Activated CD8-positive, alpha-beta T cell treated with anti-CD3 and anti-CD28 coated beads for 36 hours (primary cell): ENCODE measurements at regions of chr3 and their contacts with region 1.

Region 1: GRCh38 chr3:98817547-98818041 is 54.5 kb downstream of the ST3GAL6 start:
- DNase-seq: no peak
- ATAC-seq: peak; percentile 81
- H3K4me3 Mint-ChIP-seq: no peak overlapping the region
- H3K27ac Mint-ChIP-seq: no peak overlapping the region
- H3K4me1 Mint-ChIP-seq: no peaks in the 10 kb centered on the region
- H3K27me3 Mint-ChIP-seq: no peaks in the 10 kb centered on the region
- CTCF ChIP-seq: peak; percentile 76

Region 2: GRCh38 chr3:97957617-97958311 is 859.8 kb before region 1 on chr3:
- CTCF ChIA-PET with region 1: no interaction called
- POLR2A ChIA-PET with region 1: no interaction called
- intact Hi-C with region 1: no loop called
- DNase-seq: no peak
- ATAC-seq: no peak
- H3K4me3 Mint-ChIP-seq: no peak overlapping the region
- H3K27ac Mint-ChIP-seq: no peak overlapping the region
- H3K4me1 Mint-ChIP-seq: peaks cover 12% of the 10 kb centered on the region
- H3K27me3 Mint-ChIP-seq: no peaks in the 10 kb centered on the region
- CTCF ChIP-seq: no peak

Region 3: DNA sequence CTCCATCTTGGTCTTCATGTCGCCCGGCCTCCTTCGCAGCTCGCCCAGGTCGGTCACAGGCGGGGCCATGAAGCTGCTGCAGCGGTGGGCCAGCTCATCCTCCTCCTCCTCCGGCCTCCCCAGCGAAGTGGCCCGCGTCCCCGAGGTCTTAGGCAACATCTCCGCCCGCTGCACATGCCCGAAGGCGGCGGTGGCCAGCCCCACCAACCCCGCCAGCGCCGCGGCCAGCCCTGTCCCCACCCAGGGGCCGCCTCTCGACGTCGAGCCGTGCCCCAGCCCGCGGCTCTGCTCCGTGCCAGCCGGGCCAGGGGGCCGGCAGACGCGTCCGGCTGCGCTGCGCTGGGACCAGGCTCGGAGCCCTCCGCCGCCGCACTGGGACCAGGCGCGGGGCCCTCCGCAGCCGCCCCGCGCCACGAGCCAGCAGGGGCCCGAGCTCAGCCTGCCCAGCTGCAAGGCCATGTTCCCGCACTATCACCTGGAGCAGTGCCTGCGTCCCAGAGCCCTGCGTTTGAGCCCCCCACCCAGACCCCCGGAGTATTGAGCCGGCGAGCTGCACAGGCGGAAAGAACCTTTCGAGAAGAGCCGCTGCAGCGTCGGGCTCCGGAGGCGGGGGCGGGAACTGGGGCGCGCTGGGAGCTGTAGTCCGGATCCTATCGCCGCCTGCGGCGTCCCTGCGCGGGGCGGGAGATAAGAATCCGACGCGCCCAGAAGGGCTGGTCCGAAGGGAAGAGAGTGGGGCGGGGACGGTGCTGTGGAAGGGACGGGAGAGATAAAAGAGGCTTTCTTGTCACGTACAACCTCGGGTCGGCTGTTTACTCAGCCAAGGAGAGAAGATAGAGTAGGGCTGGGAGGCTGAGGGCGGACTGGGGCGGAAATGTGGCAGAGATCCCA is 224.3 kb before region 1 on chr3 and contains the start of gene CPOX:
- CTCF ChIA-PET with region 1: interaction called, 11 read pairs
- POLR2A ChIA-PET with region 1: no interaction called
- intact Hi-C with region 1: no loop called
- DNase-seq: peak; percentile 94
- ATAC-seq: peak; percentile 99
- H3K4me3 Mint-ChIP-seq: peak within 1 kb of the TSS; percentile 96
- H3K27ac Mint-ChIP-seq: peak within 1 kb of the TSS; percentile 96
- H3K4me1 Mint-ChIP-seq: peaks cover 41% of the 10 kb centered on the region
- H3K27me3 Mint-ChIP-seq: no peaks in the 10 kb centered on the region
- CTCF ChIP-seq: no peak
- total RNA-seq, gene CPOX: 40.5 to 45.3 TPM

Region 4: DNA sequence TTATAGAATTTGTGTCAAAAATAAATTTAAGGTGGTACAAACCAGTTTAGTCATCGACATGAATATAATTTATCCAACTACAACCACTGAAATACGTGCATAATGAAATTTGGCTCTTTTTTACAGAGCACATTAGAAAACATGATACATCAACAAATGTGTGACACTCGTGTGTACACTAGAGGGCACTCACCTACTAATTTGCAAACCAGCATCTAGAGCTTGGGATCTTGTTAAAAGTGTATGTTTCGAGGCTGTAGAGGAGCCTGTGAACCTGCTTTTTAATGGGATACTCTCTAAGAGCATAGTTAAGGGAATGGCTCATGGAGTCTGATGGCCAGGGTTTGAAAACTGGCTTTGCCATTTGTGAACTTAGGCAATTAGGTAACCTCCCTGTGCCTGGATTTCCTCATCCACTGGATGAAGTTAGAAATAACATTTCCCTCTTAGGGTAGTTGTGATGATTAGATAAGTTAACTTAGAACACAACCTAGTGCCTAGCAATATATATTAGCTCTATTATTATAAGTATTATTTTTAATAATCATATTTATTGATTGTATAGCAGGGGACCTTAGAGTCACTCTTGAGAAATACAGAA is 215.4 kb before region 1 on chr3:
- CTCF ChIA-PET with region 1: interaction called, 98 read pairs
- POLR2A ChIA-PET with region 1: no interaction called
- intact Hi-C with region 1: loop called (anchors 2 kb)
- DNase-seq: peak; percentile 41
- ATAC-seq: peak; percentile 60
- H3K4me3 Mint-ChIP-seq: no peak overlapping the region
- H3K27ac Mint-ChIP-seq: no peak overlapping the region
- H3K4me1 Mint-ChIP-seq: peaks cover 3% of the 10 kb centered on the region
- H3K27me3 Mint-ChIP-seq: peaks cover 3% of the 10 kb centered on the region
- CTCF ChIP-seq: peak; percentile 76

Region 5: DNA sequence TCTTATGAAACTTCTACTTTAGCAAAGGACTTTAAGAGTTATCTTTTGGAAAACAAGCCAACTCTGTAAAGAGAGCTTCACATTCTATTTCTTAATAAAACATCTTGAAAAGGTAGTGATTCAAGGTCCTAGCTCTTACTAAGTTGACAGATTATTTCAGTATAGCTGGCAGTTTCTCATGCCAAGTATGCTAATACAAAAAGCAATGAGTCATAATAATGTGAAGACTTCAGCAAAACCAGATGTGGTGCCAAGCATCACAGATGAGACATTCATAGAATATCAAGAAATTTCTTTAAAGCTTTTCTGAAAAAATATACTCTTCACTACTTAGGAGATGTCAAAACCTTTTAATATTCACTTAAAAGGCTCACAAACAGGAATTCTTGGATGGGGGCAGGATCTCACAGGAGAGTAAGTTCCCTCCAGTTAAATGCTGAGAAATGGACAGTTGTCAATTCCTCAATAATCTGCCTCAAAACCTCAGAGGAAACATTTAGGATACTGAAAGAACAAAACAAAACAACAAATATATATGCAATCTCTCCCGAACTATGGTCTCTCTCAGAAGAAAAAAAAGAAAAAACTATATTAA is 38.3 kb after region 1 on chr3:
- CTCF ChIA-PET with region 1: no interaction called
- POLR2A ChIA-PET with region 1: no interaction called
- intact Hi-C with region 1: no loop called
- DNase-seq: no peak
- ATAC-seq: no peak
- H3K4me3 Mint-ChIP-seq: no peak overlapping the region
- H3K27ac Mint-ChIP-seq: no peak overlapping the region
- H3K4me1 Mint-ChIP-seq: no peaks in the 10 kb centered on the region
- H3K27me3 Mint-ChIP-seq: no peaks in the 10 kb centered on the region
- CTCF ChIP-seq: no peak

Region 6: GRCh38 chr3:98994128-98994762 is 176.7 kb after region 1 on chr3:
- CTCF ChIA-PET with region 1: interaction called, 26 read pairs
- POLR2A ChIA-PET with region 1: no interaction called
- intact Hi-C with region 1: loop called (anchors 2 kb)
- DNase-seq: no peak
- ATAC-seq: no peak
- H3K4me3 Mint-ChIP-seq: no peak overlapping the region
- H3K27ac Mint-ChIP-seq: no peak overlapping the region
- H3K4me1 Mint-ChIP-seq: no peaks in the 10 kb centered on the region
- H3K27me3 Mint-ChIP-seq: peaks cover 2% of the 10 kb centered on the region
- CTCF ChIP-seq: no peak

Region 7: GRCh38 chr3:99172736-99173657 is 355.4 kb after region 1 on chr3:
- CTCF ChIA-PET with region 1: interaction called, 8 read pairs
- POLR2A ChIA-PET with region 1: no interaction called
- intact Hi-C with region 1: loop called (anchors 5 kb)
- DNase-seq: peak; percentile 55
- ATAC-seq: no peak
- H3K4me3 Mint-ChIP-seq: no peak overlapping the region
- H3K27ac Mint-ChIP-seq: no peak overlapping the region
- H3K4me1 Mint-ChIP-seq: no peaks in the 10 kb centered on the region
- H3K27me3 Mint-ChIP-seq: no peaks in the 10 kb centered on the region
- CTCF ChIP-seq: peak; percentile 69

Region 8: DNA sequence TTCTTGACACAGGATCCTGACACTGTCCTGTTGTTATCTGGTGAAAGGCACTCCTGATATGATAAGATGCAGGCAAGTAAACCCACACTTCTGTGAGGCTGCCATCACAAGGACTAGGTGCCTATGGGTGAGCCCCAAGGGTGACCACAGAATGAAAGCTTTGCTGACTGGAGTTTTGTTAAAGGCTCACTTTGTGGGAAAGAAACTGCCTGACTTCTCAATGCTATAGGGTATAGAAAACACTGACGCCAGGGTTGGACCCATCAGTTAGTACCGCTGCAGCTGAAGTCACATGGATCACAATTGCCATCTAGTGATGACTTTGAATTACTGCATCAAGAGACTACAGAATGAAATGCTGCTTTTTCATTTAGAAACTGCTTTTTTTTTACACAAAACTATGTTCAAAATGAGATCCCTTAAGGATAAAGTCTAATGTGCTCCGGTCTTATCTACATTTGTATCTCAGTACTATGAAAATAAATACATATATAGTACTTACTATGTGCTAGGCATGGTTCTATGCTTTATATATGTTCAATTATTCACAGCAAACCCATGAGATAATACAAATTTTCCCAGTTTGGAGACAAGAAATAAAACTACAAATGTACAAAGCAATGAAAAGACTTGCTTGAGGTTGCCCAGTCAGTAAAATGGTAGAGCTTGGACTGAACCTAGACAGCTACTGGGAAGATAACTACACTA is 935.8 kb after region 1 on chr3:
- CTCF ChIA-PET with region 1: interaction called, 6 read pairs
- POLR2A ChIA-PET with region 1: no interaction called
- intact Hi-C with region 1: loop called (anchors 5 kb)
- DNase-seq: peak; percentile 26
- ATAC-seq: peak; percentile 88
- H3K4me3 Mint-ChIP-seq: no peak overlapping the region
- H3K27ac Mint-ChIP-seq: no peak overlapping the region
- H3K4me1 Mint-ChIP-seq: no peaks in the 10 kb centered on the region
- H3K27me3 Mint-ChIP-seq: peaks cover 14% of the 10 kb centered on the region
- CTCF ChIP-seq: peak; percentile 74